ENCODE measurements at regions of chr4 and their contacts with region 1.

Region 1: DNA sequence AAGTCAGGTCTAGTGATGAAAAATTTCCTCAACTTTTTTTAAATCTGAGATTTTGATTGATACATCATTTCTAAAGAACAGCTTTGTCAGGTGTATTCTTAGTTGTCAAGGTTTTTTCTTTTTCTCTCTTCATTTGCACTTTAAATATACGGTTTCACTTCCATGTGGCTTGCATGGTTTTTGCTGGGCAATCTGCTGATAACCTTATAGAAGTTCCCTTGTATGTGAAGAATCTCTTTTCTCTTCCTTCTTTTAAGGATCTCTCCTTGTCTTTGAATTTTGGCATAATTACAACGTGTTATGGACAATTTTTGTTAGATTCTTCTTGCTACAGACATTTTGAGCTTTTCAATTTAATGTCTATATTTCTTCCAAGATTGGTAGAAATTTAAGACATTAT is 76.4 kb downstream of the ZNF721 start:
- DNase-seq: no peak
- H3K4me3 ChIP-seq: no peak overlapping the region
- H3K27ac ChIP-seq: no peak overlapping the region
- H3K4me1 ChIP-seq: no peaks in the 10 kb centered on the region
- H3K27me3 ChIP-seq: no peaks in the 10 kb centered on the region
- CTCF ChIP-seq: no peak

Region 2: DNA sequence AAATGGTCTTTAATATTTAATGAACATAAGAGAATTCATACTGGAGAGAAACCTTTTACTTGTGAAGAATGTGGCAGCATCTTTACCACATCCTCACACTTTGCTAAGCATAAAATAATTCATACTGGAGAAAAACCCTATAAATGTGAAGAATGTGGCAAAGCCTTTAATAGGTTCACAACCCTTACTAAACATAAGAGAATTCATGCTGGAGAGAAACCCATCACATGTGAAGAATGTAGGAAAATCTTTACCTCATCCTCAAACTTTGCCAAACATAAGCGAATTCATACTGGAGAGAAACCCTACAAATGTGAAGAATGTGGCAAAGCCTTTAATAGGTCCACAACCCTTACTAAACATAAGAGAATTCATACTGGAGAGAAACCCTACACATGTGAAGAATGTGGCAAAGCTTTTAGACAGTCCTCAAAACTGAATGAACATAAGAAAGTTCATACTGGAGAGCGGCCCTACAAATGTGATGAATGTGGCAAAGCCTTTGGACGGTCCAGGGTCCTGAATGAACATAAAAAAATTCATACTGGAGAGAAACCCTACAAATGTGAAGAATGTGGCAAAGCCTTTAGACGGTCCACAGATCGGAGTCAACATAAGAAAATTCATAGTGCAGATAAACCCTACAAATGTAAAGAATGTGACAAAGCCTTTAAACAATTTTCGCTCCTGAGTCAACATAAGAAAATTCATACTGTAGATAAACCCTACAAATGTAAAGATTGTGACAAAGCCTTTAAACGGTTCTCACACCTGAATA is 49.3 kb before region 1 on chr4:
- intact Hi-C with region 1: loop called (anchors 10 kb)
- DNase-seq: no peak
- H3K4me3 ChIP-seq: peak overlapping the region in 2 of 3 donors; percentile 21 to 34
- H3K27ac ChIP-seq: no peak overlapping the region
- H3K4me1 ChIP-seq: no peaks in the 10 kb centered on the region
- H3K27me3 ChIP-seq: no peaks in the 10 kb centered on the region
- CTCF ChIP-seq: no peak